ENCODE measurements at regions of chr6 and their contacts with region 1.

Region 1: DNA sequence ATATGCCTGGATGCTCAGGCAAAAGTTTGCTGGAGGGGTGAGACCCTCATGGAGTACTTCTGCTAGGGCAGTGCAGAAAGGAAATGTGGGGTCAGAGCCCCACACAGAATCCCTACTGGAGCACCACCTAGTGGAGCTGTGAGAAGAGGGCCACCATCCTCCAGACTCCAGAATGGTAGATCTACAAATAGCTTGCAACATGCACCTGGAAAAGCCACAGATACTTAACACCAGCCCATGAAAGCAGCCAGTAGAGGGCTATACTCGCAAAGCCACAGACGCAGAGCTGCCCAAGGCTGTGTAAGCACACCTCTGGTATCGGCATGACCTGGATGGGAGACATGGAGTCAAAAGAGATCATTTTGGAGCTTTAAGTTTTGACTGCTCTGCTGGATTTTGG is 60.7 kb upstream of the GJE1 start:
- DNase-seq: no peak
- H3K4me3 ChIP-seq: no peak overlapping the region
- H3K27ac ChIP-seq: no peak overlapping the region
- H3K4me1 ChIP-seq: no peaks in the 10 kb centered on the region
- H3K27me3 ChIP-seq: no peaks in the 10 kb centered on the region
- CTCF ChIP-seq: peak; percentile 15 to 49 (median 48)
- EP300 ChIP-seq: no peak
- POLR2A ChIP-seq: no peak
- RAD21 ChIP-seq: peak; percentile 42 to 56; a peak in 3 of 4 replicates

Region 2: DNA sequence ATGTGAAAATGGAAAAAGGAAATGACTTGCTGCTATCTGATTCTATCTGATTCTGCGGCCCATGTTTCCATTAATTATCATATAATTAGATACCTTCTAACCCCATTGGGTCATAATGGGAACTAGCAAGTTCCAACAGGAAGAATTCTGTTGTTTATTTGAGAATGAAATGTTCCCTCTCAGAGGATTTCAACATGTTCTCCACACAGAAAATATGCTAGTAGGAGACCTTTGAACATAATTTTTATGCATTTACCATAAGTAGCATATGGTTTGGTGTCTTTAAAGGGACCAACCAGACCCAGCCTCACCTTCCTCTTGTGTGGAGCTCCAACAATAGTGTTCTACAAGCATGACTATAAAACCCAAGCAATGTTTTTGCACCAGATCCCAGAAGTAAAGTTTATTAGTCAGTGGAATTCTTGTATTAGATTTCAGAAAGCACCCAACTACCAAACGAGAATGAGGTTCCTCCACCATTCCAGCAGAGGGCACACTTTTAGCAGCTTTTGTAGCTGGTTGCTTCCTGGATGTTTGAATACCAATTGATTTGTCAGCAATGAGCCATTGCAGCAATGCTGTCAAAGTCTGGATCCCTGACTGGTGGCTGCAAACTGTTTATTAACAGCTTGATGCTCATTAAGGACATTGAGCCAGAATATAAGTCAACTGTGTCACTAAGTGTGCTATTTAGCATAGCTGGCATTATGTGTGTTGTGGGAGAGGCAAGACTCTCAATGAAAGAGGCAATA is 82.9 kb before region 1 on chr6:
- CTCF ChIA-PET with region 1: interaction called, 22 read pairs
- POLR2A ChIA-PET with region 1: no interaction called
- DNase-seq: peak; percentile 25 to 54
- H3K4me3 ChIP-seq: no peak overlapping the region
- H3K27ac ChIP-seq: no peak overlapping the region
- H3K4me1 ChIP-seq: peaks cover 0 to 10% (median 3%) of the 10 kb centered on the region in 4 experiments; a peak in 3 of 7 replicates
- H3K27me3 ChIP-seq: no peaks in the 10 kb centered on the region
- CTCF ChIP-seq: peak in 2 of 3 experiments; percentile 86; a peak in 3 of 4 replicates
- EP300 ChIP-seq: no peak
- POLR2A ChIP-seq: no peak
- RAD21 ChIP-seq: peak; percentile 90 to 92

Region 3: DNA sequence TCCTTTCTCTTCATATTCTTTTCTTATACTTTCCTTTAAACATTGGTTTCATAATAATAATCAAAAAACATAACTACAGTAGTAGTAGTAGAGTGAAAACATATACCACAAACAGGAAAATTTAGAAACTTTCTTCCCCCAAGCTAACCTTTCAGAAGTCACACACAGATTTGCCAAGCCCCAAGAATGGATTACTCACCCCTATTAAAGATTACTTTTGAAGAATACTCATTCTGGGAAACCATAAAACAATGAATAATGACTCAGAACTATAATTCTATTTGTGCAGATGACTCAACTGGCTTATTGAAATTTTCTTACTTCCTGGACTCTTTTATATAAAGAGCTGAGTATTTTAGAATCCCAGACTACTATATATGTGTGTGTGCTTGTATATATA is 58.7 kb before region 1 on chr6:
- CTCF ChIA-PET with region 1: no interaction called
- POLR2A ChIA-PET with region 1: no interaction called
- DNase-seq: no peak
- H3K4me3 ChIP-seq: no peak overlapping the region
- H3K27ac ChIP-seq: no peak overlapping the region
- H3K4me1 ChIP-seq: peaks cover 2 to 7% (median 5%) of the 10 kb centered on the region in 4 experiments; a peak in 5 of 7 replicates
- H3K27me3 ChIP-seq: no peaks in the 10 kb centered on the region
- CTCF ChIP-seq: no peak
- EP300 ChIP-seq: no peak
- POLR2A ChIP-seq: no peak
- RAD21 ChIP-seq: no peak

Region 4: GRCh38 chr6:142055219-142055618 is 16.8 kb before region 1 on chr6:
- CTCF ChIA-PET with region 1: interaction called, 11 read pairs
- POLR2A ChIA-PET with region 1: no interaction called
- DNase-seq: no peak
- H3K4me3 ChIP-seq: no peak overlapping the region
- H3K27ac ChIP-seq: no peak overlapping the region
- H3K4me1 ChIP-seq: no peaks in the 10 kb centered on the region
- H3K27me3 ChIP-seq: no peaks in the 10 kb centered on the region
- CTCF ChIP-seq: no peak
- EP300 ChIP-seq: no peak
- POLR2A ChIP-seq: no peak
- RAD21 ChIP-seq: no peak

Region 5: GRCh38 chr6:142459271-142459670 is 387.3 kb after region 1 on chr6:
- CTCF ChIA-PET with region 1: no interaction called
- POLR2A ChIA-PET with region 1: no interaction called
- DNase-seq: no peak
- H3K4me3 ChIP-seq: no peak overlapping the region
- H3K27ac ChIP-seq: no peak overlapping the region
- H3K4me1 ChIP-seq: no peaks in the 10 kb centered on the region
- H3K27me3 ChIP-seq: no peaks in the 10 kb centered on the region
- CTCF ChIP-seq: no peak
- EP300 ChIP-seq: no peak
- POLR2A ChIP-seq: no peak
- RAD21 ChIP-seq: no peak